HEK293T (cell line): ENCODE measurements at regions of chr5 and their contacts with region 1.

Region 1: GRCh38 chr5:38265546-38266179 is 7.3 kb downstream of the EGFLAM start:
- DNase-seq: peak; percentile 67

Region 2: GRCh38 chr5:38285226-38285625 is 19.6 kb after region 1 on chr5:
- CTCF ChIA-PET with region 1: interaction called, 18 read pairs
- POLR2A ChIA-PET with region 1: no interaction called
- DNase-seq: no peak